ENCODE measurements at regions of chr17 and their contacts with region 1.

Region 1: GRCh38 chr17:8997994-8998628 is 23.2 kb upstream of the NTN1 start:
- DNase-seq: no peak
- H3K4me3 ChIP-seq: no peak overlapping the region
- H3K27me3 ChIP-seq: peaks cover 4% of the 10 kb centered on the region
- CTCF ChIP-seq: peak; percentile 89

Region 2: DNA sequence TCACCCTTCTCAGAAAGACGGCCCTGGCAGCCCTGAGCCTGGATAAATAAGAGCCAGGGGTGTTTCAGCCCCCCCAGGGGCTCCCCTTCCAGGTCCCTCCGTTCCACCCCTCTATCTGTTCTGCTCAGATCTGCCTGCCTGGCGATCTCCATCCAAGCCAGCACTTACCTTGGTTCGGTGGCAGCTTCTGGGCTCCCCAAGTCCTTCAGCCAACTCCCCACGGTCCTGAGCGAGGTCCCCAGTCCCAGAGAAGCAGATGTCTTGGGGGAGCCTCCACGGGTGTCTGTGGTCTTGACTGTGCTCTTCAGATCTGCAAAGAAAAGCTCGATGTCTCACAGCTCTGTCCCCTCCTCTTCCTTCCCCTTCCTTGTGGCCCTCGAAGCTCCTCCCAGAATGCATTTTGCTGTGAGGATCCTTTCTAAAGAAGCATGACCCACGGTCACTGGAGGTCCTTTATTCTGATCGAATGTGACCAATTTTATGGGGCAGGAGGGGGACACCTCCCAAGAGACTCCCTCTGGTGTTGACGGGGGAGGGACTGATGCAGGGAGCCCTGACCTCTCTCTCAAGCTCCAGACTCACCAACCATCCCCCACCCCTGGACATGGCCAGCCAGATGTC is 130.6 kb before region 1 on chr17 and contains the start of gene PIK3R6:
- CTCF ChIA-PET with region 1: no interaction called
- POLR2A ChIA-PET with region 1: no interaction called
- DNase-seq: no peak
- H3K4me3 ChIP-seq: no peak within 1 kb of the TSS
- H3K27me3 ChIP-seq: no peaks in the 10 kb centered on the region; the same call in 1 of the 2 replicates
- CTCF ChIP-seq: no peak
- polyA plus RNA-seq, gene PIK3R6: not detected in 2 replicates

Region 3: GRCh38 chr17:8887834-8888703 is 110.0 kb before region 1 on chr17:
- CTCF ChIA-PET with region 1: interaction called, 25 read pairs
- POLR2A ChIA-PET with region 1: no interaction called
- DNase-seq: no peak
- H3K4me3 ChIP-seq: no peak overlapping the region
- H3K27me3 ChIP-seq: no peaks in the 10 kb centered on the region
- CTCF ChIP-seq: peak; percentile 62

Region 4: GRCh38 chr17:8969901-8970300 is 28.2 kb before region 1 on chr17:
- CTCF ChIA-PET with region 1: no interaction called
- POLR2A ChIA-PET with region 1: no interaction called
- DNase-seq: no peak
- H3K4me3 ChIP-seq: no peak overlapping the region
- H3K27me3 ChIP-seq: no peaks in the 10 kb centered on the region
- CTCF ChIP-seq: no peak

Region 5: DNA sequence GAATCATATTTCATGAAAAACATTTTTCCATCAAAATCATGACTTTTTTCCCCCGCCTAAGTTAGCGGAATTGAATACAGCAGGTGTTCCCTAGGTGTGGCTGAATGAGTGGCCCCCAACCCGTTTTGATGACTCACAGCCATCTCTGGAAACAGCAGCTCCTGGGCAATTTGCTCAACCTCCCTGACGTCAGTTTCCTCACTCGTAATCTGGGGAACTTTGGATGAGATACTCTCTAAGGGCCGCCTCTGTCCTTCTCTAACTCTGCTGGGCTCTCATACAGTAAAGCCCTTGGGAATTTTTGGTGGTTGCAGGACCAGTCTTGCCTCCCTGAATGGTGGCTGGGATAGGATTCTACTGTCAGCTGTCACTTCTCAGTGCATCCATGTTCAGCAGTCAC is 11.6 kb after region 1 on chr17:
- CTCF ChIA-PET with region 1: interaction called, 16 read pairs
- POLR2A ChIA-PET with region 1: no interaction called
- DNase-seq: no peak
- H3K4me3 ChIP-seq: no peak overlapping the region
- H3K27me3 ChIP-seq: peaks cover 1% of the 10 kb centered on the region; the same call in 1 of the 2 replicates
- CTCF ChIP-seq: no peak

Region 6: GRCh38 chr17:9522074-9522473 is 524.0 kb after region 1 on chr17:
- CTCF ChIA-PET with region 1: interaction called, 80 read pairs
- POLR2A ChIA-PET with region 1: no interaction called
- DNase-seq: no peak
- H3K4me3 ChIP-seq: no peak overlapping the region
- H3K27me3 ChIP-seq: no peaks in the 10 kb centered on the region
- CTCF ChIP-seq: peak; percentile 51